ENCODE measurements at regions of chr4 and their contacts with region 1.

Region 1: GRCh38 chr4:26719954-26720552 is 136.2 kb downstream of the TBC1D19 start:
- DNase-seq: no peak
- H3K4me3 ChIP-seq: no peak overlapping the region
- H3K27ac ChIP-seq: no peak overlapping the region
- H3K4me1 ChIP-seq: no peaks in the 10 kb centered on the region
- H3K27me3 ChIP-seq: no peaks in the 10 kb centered on the region
- CTCF ChIP-seq: peak; percentile 54 to 72 (median 60)
- EP300 ChIP-seq: no peak
- POLR2A ChIP-seq: no peak

Region 2: DNA sequence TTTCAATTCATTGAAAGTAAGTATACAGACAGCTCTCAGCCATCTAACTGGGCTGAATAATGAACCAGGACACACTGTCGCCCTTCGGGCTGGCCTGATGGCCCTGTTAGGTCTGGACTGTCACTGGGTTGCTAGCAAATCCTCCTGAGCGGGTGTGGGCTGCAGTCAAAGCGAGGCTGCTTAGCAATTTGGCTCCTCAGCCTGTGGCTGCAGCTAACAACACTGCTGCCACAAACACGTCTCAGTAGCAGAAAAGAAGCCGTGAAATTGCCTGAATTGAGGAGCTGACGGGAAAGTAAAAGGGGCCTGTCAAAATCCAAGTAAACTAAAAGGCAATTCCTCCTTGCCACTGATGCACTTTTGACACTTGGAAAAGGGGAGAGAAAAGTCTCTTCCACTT is 733.2 kb before region 1 on chr4:
- intact Hi-C with region 1: loop called (anchors 5 kb)
- DNase-seq: no peak
- H3K4me3 ChIP-seq: no peak overlapping the region
- H3K27ac ChIP-seq: no peak overlapping the region
- H3K4me1 ChIP-seq: peaks cover 0 to 9% (median 4%) of the 10 kb centered on the region in 4 donors
- H3K27me3 ChIP-seq: no peaks in the 10 kb centered on the region
- CTCF ChIP-seq: no peak
- EP300 ChIP-seq: no peak
- POLR2A ChIP-seq: no peak

Region 3: DNA sequence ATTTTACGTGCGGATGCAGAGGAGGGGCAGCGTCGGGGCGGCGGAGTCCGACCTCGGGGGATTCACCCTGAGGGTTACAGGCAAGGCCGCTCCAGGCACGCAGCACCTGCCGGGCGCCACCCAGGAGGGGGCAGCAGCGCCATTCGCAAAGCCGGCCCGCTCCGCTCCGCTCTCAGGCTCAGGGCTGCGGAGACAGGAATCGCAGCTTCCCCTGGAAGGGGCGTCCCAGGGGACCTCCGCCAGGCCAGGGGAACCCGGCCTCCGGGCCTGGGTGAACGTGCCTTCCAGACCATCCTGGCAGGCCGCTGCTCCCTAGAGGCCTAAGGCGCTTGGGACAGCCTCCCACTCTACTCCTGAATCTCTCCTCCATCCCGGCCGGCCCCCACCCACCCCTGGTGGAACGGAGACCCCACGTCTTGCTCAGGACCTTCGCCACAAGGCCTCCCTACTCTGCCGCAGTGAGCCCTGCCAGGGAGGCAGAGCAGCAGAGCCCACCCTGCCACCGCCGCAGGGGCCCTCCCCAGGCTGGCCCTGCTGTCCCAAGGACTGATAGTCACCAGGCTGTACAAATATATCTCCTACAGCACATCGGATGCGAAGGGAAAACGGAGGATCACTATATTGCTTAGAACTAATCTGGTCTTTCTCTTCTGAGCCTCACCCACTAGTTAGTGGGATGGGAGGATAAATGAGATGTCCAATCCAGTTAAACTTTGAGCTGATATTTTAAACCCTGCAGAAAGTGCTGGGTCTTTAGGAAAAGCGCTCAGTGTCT is 691.1 kb before region 1 on chr4:
- intact Hi-C with region 1: loop called (anchors 5 kb)
- DNase-seq: peak; percentile 88
- H3K4me3 ChIP-seq: peak overlapping the region in 3 of 4 donors; percentile 20 to 24 (median 23)
- H3K27ac ChIP-seq: peak overlapping the region in 1 of 4 donors; percentile 36
- H3K4me1 ChIP-seq: peaks cover 0 to 28% (median 20%) of the 10 kb centered on the region in 4 donors
- H3K27me3 ChIP-seq: no peaks in the 10 kb centered on the region
- CTCF ChIP-seq: peak; percentile 67 to 93 (median 72)
- EP300 ChIP-seq: no peak
- POLR2A ChIP-seq: no peak

Region 4: GRCh38 chr4:26330186-26330787 is 389.8 kb before region 1 on chr4:
- intact Hi-C with region 1: loop called (anchors 5 kb)
- DNase-seq: no peak
- H3K4me3 ChIP-seq: no peak overlapping the region
- H3K27ac ChIP-seq: peak overlapping the region in 1 of 4 donors; percentile 2
- H3K4me1 ChIP-seq: peaks cover 0 to 61% (median 38%) of the 10 kb centered on the region in 4 donors
- H3K27me3 ChIP-seq: no peaks in the 10 kb centered on the region
- CTCF ChIP-seq: peak; percentile 38 to 73 (median 62)
- EP300 ChIP-seq: no peak
- POLR2A ChIP-seq: no peak

Region 5: DNA sequence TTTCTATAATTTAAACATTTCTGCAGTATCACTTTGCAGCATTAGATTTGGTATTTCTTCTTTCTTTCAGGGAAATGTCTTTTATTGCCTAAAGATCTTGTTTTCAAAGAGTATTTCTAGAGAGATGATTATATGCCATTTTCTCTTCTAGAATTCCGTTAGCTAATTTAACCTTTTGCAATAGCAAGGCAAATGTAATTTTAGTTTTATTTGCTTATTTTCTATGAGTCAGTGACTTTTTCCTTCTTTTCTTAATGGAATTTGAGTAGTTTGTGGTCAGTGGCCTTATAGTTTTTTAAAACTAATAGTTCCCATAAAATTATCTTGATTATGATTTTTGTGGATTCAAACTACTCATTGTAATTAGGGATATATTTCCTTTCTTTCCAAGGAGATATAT is 301.9 kb before region 1 on chr4:
- intact Hi-C with region 1: loop called (anchors 5 kb)
- DNase-seq: no peak
- H3K4me3 ChIP-seq: no peak overlapping the region
- H3K27ac ChIP-seq: no peak overlapping the region
- H3K4me1 ChIP-seq: peaks cover 0 to 61% (median 26%) of the 10 kb centered on the region in 4 donors
- H3K27me3 ChIP-seq: no peaks in the 10 kb centered on the region
- CTCF ChIP-seq: no peak
- EP300 ChIP-seq: no peak
- POLR2A ChIP-seq: no peak

Region 6: GRCh38 chr4:26459054-26459755 is 260.8 kb before region 1 on chr4:
- intact Hi-C with region 1: loop called (anchors 5 kb)
- DNase-seq: no peak
- H3K4me3 ChIP-seq: no peak overlapping the region
- H3K27ac ChIP-seq: peak overlapping the region; percentile 28 to 74 (median 48)
- H3K4me1 ChIP-seq: peaks cover 0 to 67% (median 50%) of the 10 kb centered on the region in 4 donors
- H3K27me3 ChIP-seq: no peaks in the 10 kb centered on the region
- CTCF ChIP-seq: peak in 3 of 4 experiments; percentile 11 to 59 (median 43)
- EP300 ChIP-seq: no peak
- POLR2A ChIP-seq: no peak